ENCODE measurements at regions of chr12 and their contacts with region 1.

Region 1: DNA sequence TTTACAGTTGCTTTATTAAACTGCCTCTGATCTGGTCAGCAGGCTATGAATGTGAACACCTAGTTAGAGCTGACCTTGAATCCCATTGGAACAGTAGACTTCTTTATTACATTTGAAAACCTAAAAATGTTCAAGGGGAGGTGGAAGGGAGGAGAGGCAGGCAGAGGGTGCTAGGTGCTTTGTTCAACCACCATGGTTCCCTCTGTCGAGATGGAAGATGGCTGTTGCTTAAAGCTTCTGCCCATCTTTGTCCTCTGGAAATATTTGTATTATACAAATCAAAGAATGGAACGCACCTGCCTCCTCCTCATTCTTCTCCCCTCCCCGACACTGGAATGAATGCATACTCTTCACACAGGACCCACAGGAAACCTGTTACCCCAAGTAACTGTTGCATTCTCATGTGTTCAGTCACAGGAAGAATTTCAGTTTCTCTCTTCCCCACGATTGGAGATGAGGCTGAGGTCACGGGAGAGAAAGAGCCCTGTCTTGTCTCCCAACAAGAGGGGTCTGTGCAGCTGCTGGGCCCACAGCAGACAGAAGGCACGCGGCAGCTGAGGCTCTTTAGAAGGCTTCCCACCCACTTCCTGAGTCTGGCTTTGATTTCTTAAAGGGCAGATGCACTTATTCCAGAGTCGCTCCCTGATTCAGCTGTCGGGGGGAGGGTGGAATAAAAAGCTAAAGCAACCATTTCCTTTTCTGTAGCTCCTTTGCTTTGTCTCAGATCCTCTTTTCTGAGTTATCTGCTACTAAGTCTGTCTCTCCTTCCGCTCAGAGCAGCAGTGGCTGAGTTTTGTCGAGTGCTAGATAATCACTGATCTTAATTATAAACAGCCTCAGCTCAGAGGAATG is 217.9 kb upstream of the BTG1 start:
- DNase-seq: peak; percentile 56
- H3K4me3 Mint-ChIP-seq: peak overlapping the region; percentile 81
- H3K27ac Mint-ChIP-seq: peak overlapping the region; percentile 84
- H3K4me1 Mint-ChIP-seq: peaks cover 66% of the 10 kb centered on the region
- H3K27me3 Mint-ChIP-seq: no peaks in the 10 kb centered on the region

Region 2: DNA sequence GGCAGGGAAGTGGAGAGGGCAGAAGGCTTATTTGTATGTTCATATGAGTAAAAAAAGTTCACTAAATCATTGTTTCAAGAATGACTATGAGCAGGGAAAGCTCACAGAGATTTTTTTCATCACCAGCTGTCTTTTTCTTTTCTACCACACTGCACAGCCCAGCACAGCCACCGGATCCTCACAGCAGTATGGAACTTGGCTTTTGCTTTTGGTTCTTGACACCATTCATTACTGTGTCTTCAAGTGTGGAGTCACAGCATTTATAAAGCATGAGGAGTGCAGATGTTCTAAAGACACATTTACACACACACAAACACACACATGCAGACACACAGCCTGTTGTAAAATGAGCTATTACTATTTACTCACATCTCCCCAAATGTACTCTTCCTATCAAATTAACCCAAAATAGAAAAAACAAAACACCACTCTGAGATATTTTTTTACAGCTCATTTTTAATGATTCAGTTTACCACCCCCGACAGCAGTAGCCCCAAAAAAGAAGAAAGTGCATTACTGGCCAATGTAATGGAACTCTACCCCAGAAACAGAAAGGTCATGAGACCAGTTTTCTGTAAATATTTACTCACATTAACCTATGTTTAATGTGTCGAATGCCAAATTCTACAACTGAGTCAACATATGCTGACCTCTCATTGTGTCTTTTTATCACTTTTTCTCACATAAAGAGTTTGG is 278.3 kb before region 1 on chr12:
- CTCF ChIA-PET with region 1: no interaction called
- intact Hi-C with region 1: no loop called
- DNase-seq: peak; percentile 60
- H3K4me3 Mint-ChIP-seq: no peak overlapping the region
- H3K27ac Mint-ChIP-seq: no peak overlapping the region
- H3K4me1 Mint-ChIP-seq: peaks cover 57% of the 10 kb centered on the region
- H3K27me3 Mint-ChIP-seq: no peaks in the 10 kb centered on the region

Region 3: GRCh38 chr12:92312463-92312964 is 51.0 kb before region 1 on chr12:
- CTCF ChIA-PET with region 1: no interaction called
- intact Hi-C with region 1: no loop called
- DNase-seq: no peak
- H3K4me3 Mint-ChIP-seq: no peak overlapping the region
- H3K27ac Mint-ChIP-seq: no peak overlapping the region
- H3K4me1 Mint-ChIP-seq: peaks cover 20% of the 10 kb centered on the region
- H3K27me3 Mint-ChIP-seq: no peaks in the 10 kb centered on the region

Region 4: GRCh38 chr12:92396647-92397252 is 33.2 kb after region 1 on chr12:
- CTCF ChIA-PET with region 1: no interaction called
- intact Hi-C with region 1: loop called (anchors 2 kb)
- DNase-seq: peak; percentile 39
- H3K4me3 Mint-ChIP-seq: no peak overlapping the region
- H3K27ac Mint-ChIP-seq: peak overlapping the region; percentile 73
- H3K4me1 Mint-ChIP-seq: peaks cover 97% of the 10 kb centered on the region
- H3K27me3 Mint-ChIP-seq: no peaks in the 10 kb centered on the region

Region 5: GRCh38 chr12:93109551-93110203 is 746.2 kb after region 1 on chr12:
- CTCF ChIA-PET with region 1: no interaction called
- intact Hi-C with region 1: no loop called
- DNase-seq: peak; percentile 83
- H3K4me3 Mint-ChIP-seq: no peak overlapping the region
- H3K27ac Mint-ChIP-seq: peak overlapping the region; percentile 91
- H3K4me1 Mint-ChIP-seq: peaks cover 32% of the 10 kb centered on the region
- H3K27me3 Mint-ChIP-seq: no peaks in the 10 kb centered on the region

Measured in activated naive CD4-positive, alpha-beta T cell treated with anti-CD3 and anti-CD28 coated beads for 36 hours (primary cell).